ENCODE measurements at regions of chr13 and their contacts with region 1.

Region 1: GRCh38 chr13:76667551-76667950 is 218.7 kb downstream of the KCTD12 start:
- DNase-seq: no peak

Region 2: GRCh38 chr13:76822698-76823267 is 155.2 kb after region 1 on chr13:
- intact Hi-C with region 1: loop called (anchors 5 kb)
- DNase-seq: no peak

Region 3: DNA sequence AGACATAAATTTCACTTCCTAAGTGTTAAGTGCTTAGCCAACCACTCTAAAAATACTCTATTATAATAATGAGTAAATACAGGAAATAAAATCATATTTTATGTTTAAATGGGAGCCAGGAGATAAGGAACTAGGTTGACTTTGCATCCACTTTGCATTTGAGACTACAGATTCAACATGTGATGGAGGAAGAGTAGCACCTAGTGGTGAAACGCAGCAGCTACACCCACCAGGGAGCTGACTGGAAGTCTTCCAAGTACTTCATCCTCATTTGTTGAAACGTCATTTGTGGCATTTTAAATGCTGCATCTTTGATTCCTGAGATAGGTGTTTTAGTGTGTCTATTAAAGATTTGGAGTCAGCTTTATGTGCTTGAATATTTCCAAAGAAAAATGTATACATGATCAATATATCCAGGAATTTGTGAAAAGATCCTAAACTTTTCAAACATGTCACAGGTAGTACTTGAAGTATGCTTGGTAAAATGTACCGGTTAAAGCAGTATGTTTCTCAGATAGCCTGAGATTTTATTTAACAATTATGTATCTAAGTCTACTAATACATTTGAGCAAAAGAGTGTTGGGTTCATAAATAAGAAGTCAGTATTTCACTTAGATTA is 236.1 kb after region 1 on chr13:
- intact Hi-C with region 1: loop called (anchors 5 kb)
- DNase-seq: peak; percentile 73

Measured in cardiac septum (tissue), 1 donor.